Mammary epithelial cell (primary cell): ENCODE measurements at regions of chr11 and their contacts with region 1.

Region 1: DNA sequence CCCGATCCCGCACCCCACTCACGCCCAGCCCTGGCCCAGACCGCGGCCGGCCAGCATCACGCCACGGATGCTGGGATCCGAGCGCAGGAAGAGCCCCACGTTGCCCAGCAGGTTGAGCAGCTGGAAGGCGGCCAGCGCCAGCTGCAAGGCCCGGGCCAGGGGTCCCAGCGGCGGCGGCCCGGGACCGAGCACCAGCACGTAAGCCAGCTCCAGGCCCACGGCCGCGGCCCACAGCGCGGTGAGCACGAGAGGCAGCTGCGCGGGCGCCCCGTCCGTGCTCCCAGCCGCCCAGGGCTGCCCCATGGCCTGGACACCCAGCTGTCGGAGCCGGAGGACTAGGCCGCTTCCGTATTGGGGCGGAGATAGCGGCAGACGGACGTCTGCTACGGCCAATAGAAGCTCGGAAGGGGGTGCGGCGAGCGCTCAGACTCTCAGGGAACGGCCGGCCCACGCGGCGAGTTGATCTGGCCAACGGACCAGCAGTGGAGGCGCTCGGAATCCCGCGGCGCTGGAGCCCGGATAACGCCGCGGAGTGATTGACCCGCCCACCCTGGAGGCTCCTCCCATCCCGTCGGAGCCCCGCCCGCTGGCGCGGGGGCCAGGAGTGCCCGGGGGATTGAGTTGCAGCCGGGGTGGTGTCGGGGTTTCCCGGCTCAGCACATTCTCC is at the start of gene ZDHHC24:
- DNase-seq: peak; percentile 97
- H3K4me3 ChIP-seq: peak within 1 kb of the TSS; percentile 56 to 93 (median 82)
- H3K27ac ChIP-seq: peak within 1 kb of the TSS; percentile 46
- H3K4me1 ChIP-seq: peaks cover 18% of the 10 kb centered on the region
- H3K27me3 ChIP-seq: no peaks in the 10 kb centered on the region
- CTCF ChIP-seq: no peak
- total RNA-seq, gene ZDHHC24: 11.0 to 16.8 TPM

Region 2: DNA sequence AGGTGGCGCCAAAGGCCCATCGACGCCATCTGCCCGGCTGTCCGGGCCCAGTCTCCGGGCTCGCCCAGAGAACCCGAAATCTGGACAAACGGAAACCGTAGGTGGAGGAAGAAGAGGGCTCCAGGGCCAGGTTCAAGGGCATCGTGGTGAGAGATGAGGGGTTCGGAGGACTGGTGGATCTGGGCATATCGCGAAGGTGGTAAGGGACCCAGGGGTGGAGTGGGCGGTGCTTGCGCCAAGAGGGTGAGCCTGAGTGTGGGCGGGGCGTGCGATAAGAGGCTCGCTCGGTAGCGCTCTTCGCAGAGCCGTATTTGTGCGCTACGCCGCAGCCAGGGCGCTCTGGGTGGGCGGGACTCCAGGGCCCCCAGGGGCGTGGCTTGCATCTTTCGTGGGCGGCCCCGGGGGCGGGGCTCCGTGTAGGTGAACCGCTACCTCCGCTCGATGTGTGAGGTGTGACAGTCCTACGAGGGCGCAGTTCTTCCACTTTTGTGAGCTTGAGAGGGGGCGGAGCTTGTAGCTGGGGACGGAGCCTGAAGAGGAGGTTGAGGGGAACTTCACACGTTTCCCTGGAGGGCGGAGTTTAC is 233.8 kb before region 1 on chr11:
- CTCF ChIA-PET with region 1: no interaction called
- dilution Hi-C with region 1: no loop called
- in situ Hi-C with region 1: no loop called
- intact Hi-C with region 1: no loop called
- DNase-seq: peak; percentile 91
- H3K4me3 ChIP-seq: peak overlapping the region; percentile 61 to 63 (median 61)
- H3K27ac ChIP-seq: peak overlapping the region; percentile 54
- H3K4me1 ChIP-seq: peaks cover 4% of the 10 kb centered on the region
- H3K27me3 ChIP-seq: no peaks in the 10 kb centered on the region
- CTCF ChIP-seq: peak in 1 of 2 donors; percentile 98

Region 3: GRCh38 chr11:66510271-66510989 is 35.4 kb before region 1 on chr11 and contains the start of gene BBS1:
- CTCF ChIA-PET with region 1: no interaction called
- dilution Hi-C with region 1: loop called (anchors 5 kb)
- in situ Hi-C with region 1: no loop called
- intact Hi-C with region 1: no loop called
- DNase-seq: peak; percentile 69
- H3K4me3 ChIP-seq: peak within 1 kb of the TSS; percentile 67 to 84 (median 71)
- H3K27ac ChIP-seq: peak within 1 kb of the TSS; percentile 34
- H3K4me1 ChIP-seq: peaks cover 4% of the 10 kb centered on the region
- H3K27me3 ChIP-seq: no peaks in the 10 kb centered on the region
- CTCF ChIP-seq: no peak
- total RNA-seq, gene BBS1: 20.3 to 44.2 TPM

Region 4: GRCh38 chr11:66592457-66593302 is 46.8 kb after region 1 on chr11 and contains the starts of genes CCDC87 and CCS:
- CTCF ChIA-PET with region 1: no interaction called
- dilution Hi-C with region 1: loop called (anchors 5 kb)
- in situ Hi-C with region 1: no loop called
- intact Hi-C with region 1: no loop called
- DNase-seq: peak; percentile 92
- H3K4me3 ChIP-seq: peak within 1 kb of the TSS; percentile 45 to 78 (median 73)
- H3K27ac ChIP-seq: peak within 1 kb of the TSS; percentile 65
- H3K4me1 ChIP-seq: peaks cover 8% of the 10 kb centered on the region
- H3K27me3 ChIP-seq: no peaks in the 10 kb centered on the region
- CTCF ChIP-seq: peak; percentile 47 to 72
- total RNA-seq, gene CCDC87: 0.31 to 0.83 TPM
- total RNA-seq, gene CCS: 21.3 to 31.2 TPM

Region 5: GRCh38 chr11:66624087-66624849 is 78.4 kb after region 1 on chr11:
- CTCF ChIA-PET with region 1: no interaction called
- dilution Hi-C with region 1: loop called (anchors 5 kb)
- in situ Hi-C with region 1: no loop called
- intact Hi-C with region 1: no loop called
- DNase-seq: no peak
- H3K4me3 ChIP-seq: no peak overlapping the region
- H3K27ac ChIP-seq: no peak overlapping the region
- H3K4me1 ChIP-seq: peaks cover 8% of the 10 kb centered on the region
- H3K27me3 ChIP-seq: no peaks in the 10 kb centered on the region
- CTCF ChIP-seq: no peak

Region 6: DNA sequence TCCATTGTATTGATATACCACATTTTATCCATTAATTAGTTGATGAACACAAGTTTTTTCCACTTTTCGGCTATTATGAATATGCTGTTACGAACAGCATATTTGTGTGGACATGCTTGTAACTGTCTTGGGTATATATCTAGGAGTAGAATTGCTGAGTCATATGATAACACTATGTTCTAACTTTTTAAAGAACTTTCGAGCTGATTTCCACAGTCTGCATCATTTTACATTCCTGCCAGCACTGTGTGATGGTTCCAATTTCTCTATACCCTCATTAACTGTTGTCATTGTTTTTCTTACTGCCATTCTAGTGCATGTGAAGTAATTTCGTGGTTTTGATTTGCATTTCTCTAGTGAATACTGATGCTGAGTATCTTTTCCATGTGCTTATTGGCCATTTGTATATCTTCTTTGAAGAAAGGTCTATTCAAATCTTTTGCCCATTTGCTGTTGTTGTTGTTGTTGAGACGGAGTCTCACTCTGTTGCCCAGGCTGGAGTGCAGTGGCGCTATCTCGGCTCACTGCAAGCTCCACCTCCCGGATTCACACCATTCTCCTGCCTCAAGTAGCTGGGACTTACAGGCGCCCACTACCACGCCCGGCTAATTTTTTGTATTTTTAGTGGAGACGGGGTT is 290.1 kb after region 1 on chr11:
- CTCF ChIA-PET with region 1: no interaction called
- dilution Hi-C with region 1: no loop called
- in situ Hi-C with region 1: no loop called
- intact Hi-C with region 1: loop called (anchors 1 kb)
- DNase-seq: no peak
- H3K4me3 ChIP-seq: no peak overlapping the region
- H3K27ac ChIP-seq: no peak overlapping the region
- H3K4me1 ChIP-seq: no peaks in the 10 kb centered on the region
- H3K27me3 ChIP-seq: no peaks in the 10 kb centered on the region
- CTCF ChIP-seq: no peak